ENCODE measurements at regions of chr18 and their contacts with region 1.

Region 1: GRCh38 chr18:58541789-58542425 is 87.0 kb downstream of the ALPK2 start:
- DNase-seq: peak in 8 of 14 experiments; percentile 6 to 80 (median 36)
- ATAC-seq: peak; percentile 82
- H3K4me3 ChIP-seq: no peak overlapping the region
- H3K4me3 Mint-ChIP-seq: no peak overlapping the region
- H3K27ac ChIP-seq: no peak overlapping the region
- H3K27ac Mint-ChIP-seq: no peak overlapping the region
- H3K4me1 ChIP-seq: peaks cover 18% of the 10 kb centered on the region
- H3K4me1 Mint-ChIP-seq: peaks cover 27% of the 10 kb centered on the region
- H3K27me3 ChIP-seq: no peaks in the 10 kb centered on the region
- H3K27me3 Mint-ChIP-seq: no peaks in the 10 kb centered on the region
- CTCF ChIP-seq: no peak

Region 2: GRCh38 chr18:58605027-58606020 is 63.4 kb after region 1 on chr18:
- CTCF ChIA-PET with region 1: no interaction called
- POLR2A ChIA-PET with region 1: no interaction called
- intact Hi-C with region 1: loop called in 1 of 2 experiments (anchors 5 kb)
- DNase-seq: peak in 11 of 14 experiments; percentile 8 to 66 (median 42)
- ATAC-seq: peak; percentile 82
- H3K4me3 ChIP-seq: no peak overlapping the region
- H3K4me3 Mint-ChIP-seq: peak overlapping the region; percentile 49
- H3K27ac ChIP-seq: no peak overlapping the region
- H3K27ac Mint-ChIP-seq: peak overlapping the region; percentile 57
- H3K4me1 ChIP-seq: peaks cover 34% of the 10 kb centered on the region
- H3K4me1 Mint-ChIP-seq: peaks cover 53% of the 10 kb centered on the region
- H3K27me3 ChIP-seq: no peaks in the 10 kb centered on the region
- H3K27me3 Mint-ChIP-seq: no peaks in the 10 kb centered on the region
- CTCF ChIP-seq: no peak

Measured in CD4-positive, alpha-beta T cell (primary cell).